Naive thymus-derived CD8-positive, alpha-beta T cell (primary cell): ENCODE measurements at regions of chr19 and their contacts with region 1.

Region 1: DNA sequence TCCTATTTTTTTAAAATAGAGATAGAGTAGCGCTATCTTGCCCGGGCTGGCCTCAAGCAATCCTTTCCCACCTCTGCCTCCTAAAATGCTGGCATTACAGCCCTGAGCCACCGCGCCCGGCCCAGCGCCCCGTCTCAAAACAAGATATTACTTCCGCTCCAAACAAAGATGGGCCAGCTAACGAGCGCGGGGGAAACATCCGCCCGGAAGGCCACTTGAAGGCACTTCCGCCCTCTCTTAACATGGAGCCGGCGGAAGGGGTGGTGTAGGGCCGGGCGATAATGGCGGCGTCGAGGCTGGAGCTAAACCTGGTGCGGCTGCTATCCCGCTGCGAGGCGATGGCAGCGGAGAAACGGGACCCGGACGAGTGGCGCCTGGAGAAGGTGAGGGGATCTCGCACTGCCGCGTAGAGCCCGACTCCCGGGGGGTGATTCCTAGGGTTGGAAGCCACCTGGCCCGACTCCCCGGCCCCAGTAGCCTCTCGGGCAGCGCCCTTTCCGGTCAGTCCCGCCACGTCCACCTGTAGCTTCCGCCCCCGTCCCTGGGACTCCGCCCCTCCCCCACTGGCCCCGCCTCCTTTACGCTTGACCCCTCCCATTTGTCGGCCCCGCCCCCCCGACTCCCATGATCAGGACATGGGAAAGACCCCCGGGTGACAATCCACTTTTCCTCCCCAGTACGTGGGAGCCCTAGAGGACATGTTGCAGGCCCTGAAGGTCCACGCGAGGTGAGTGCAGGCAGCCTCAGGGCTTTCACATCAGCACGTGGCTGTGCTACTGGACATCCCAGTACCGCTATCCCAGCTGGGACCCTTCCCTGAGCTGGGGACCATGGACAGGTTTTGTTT is at the start of gene USE1:
- DNase-seq: peak; percentile 76 to 95 (median 86)
- ATAC-seq: peak; percentile 96 to 99
- H3K4me3 Mint-ChIP-seq: peak within 1 kb of the TSS; percentile 83 to 95 (median 90)
- H3K27ac Mint-ChIP-seq: peak within 1 kb of the TSS; percentile 94 to 100 (median 99)
- H3K4me1 Mint-ChIP-seq: peaks cover 2 to 21% (median 15%) of the 10 kb centered on the region in 4 donors
- H3K27me3 Mint-ChIP-seq: no peaks in the 10 kb centered on the region
- polyA plus RNA-seq, gene USE1: 50.4 to 69.0 (median 57.0) TPM

Region 2: DNA sequence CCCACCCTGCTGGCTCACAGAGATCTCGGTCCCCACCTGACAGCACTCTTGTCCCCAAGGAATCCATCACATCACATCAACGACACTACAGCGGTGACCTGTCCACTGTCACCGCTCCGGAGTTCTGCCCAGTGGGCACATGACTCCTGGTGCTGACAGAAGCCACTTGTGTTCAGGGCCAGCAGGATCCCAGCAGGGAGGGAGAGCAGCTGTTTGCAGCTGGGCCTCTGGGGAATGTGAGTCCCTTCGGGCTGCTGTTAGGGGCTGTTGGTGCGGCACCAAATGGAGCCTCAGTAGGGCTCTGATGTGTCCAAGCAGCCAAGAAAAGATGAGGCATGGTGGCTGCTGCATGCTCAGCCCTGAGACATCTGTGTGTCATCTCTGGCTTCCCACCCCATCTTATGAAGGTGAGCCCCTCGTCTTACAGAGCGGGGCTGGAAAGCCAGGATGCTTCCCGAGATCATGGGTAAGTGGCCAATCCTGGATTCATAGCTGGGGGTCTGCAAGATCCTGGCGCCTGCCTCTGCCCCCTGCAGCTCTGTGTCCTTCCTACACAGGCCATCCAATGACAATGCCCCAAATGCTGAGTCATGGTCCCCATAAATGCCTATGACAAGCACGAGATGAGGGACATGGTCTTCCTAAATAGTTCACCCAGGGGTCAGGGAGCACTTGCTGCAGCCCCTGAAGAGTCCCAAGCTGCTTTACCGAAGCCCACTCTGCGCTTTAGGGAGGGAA is 270.6 kb before region 1 on chr19:
- POLR2A ChIA-PET with region 1: no interaction called
- DNase-seq: no peak
- ATAC-seq: no peak
- H3K4me3 Mint-ChIP-seq: no peak overlapping the region
- H3K27ac Mint-ChIP-seq: no peak overlapping the region
- H3K4me1 Mint-ChIP-seq: peaks cover 0 to 11% (median 0%) of the 10 kb centered on the region in 4 donors
- H3K27me3 Mint-ChIP-seq: peaks cover 0 to 4% (median 0%) of the 10 kb centered on the region in 5 donors

Region 3: GRCh38 chr19:17075035-17075863 is 140.1 kb before region 1 on chr19 and contains the starts of genes HAUS8 and MYO9B:
- POLR2A ChIA-PET with region 1: interaction called, 20 read pairs
- DNase-seq: peak; percentile 98 to 100 (median 99)
- ATAC-seq: peak; percentile 89 to 96
- H3K4me3 Mint-ChIP-seq: peak within 1 kb of the TSS; percentile 91 to 99 (median 98)
- H3K27ac Mint-ChIP-seq: peak within 1 kb of the TSS; percentile 92 to 99 (median 97)
- H3K4me1 Mint-ChIP-seq: peaks cover 29 to 74% (median 66%) of the 10 kb centered on the region in 4 donors
- H3K27me3 Mint-ChIP-seq: no peaks in the 10 kb centered on the region
- polyA plus RNA-seq, gene HAUS8: 5.3 to 11.9 (median 5.9) TPM
- polyA plus RNA-seq, gene MYO9B: 3.3 to 22.3 (median 8.0) TPM

Region 4: GRCh38 chr19:17226002-17226933 is 10.9 kb after region 1 on chr19 and contains the start of gene OCEL1:
- POLR2A ChIA-PET with region 1: interaction called, 105 read pairs
- DNase-seq: peak; percentile 92 to 99 (median 94)
- ATAC-seq: peak; percentile 90 to 92
- H3K4me3 Mint-ChIP-seq: peak within 1 kb of the TSS; percentile 88 to 99 (median 94)
- H3K27ac Mint-ChIP-seq: peak within 1 kb of the TSS; percentile 66 to 99 (median 96)
- H3K4me1 Mint-ChIP-seq: peaks cover 7 to 17% (median 11%) of the 10 kb centered on the region in 4 donors
- H3K27me3 Mint-ChIP-seq: no peaks in the 10 kb centered on the region
- polyA plus RNA-seq, gene OCEL1: 21.9 to 52.4 (median 40.1) TPM

Region 5: DNA sequence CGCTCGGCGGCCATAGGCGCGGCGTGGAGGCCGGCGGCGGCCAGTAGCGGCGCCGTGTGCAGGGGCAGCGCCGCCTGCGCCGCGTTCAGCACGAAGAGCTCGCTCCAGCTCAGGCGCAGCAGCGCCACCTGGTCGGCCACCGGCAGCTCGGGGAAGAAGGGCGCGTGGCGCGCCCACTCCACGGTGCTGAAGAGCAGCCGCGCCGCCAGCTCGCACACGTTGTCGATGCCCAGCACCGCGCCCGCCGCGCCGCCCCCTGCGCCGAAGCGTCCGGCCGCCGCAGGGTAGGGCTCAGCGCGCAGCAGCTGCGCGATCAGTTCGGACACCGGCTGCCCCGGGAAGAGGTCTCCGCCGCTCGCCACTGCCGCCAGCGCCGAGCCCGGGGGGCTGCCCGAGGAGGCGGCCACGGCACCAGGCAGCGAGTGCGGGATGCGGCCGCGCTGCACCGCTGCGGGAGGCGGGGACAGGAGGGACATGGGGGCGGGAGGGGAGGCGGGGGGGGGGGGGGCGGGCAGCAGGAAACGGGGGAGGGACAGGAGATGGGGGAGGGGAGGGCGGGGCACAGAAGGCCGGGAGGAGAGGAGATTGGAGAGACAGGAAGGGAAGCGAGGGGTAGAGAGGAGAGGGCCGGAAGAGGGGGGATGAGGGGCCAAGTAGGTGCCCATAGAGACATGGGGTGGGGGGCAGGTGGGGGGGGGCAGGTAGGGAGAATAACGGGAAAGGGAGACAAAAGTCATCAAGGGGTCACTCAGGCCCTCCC is 20.4 kb after region 1 on chr19:
- POLR2A ChIA-PET with region 1: interaction called, 21 read pairs
- DNase-seq: peak; percentile 58 to 85 (median 72)
- ATAC-seq: peak; percentile 94 to 97
- H3K4me3 Mint-ChIP-seq: peak overlapping the region; percentile 29 to 88 (median 80)
- H3K27ac Mint-ChIP-seq: peak overlapping the region in 1 of 10 donors; percentile 36
- H3K4me1 Mint-ChIP-seq: peaks cover 9 to 15% (median 14%) of the 10 kb centered on the region in 4 donors
- H3K27me3 Mint-ChIP-seq: no peaks in the 10 kb centered on the region

Region 6: GRCh38 chr19:17510220-17510980 is 295.1 kb after region 1 on chr19:
- POLR2A ChIA-PET with region 1: no interaction called
- DNase-seq: no peak
- ATAC-seq: no peak
- H3K4me3 Mint-ChIP-seq: peak overlapping the region; percentile 95 to 100 (median 100)
- H3K27ac Mint-ChIP-seq: peak overlapping the region; percentile 80 to 100 (median 96)
- H3K4me1 Mint-ChIP-seq: peaks cover 16 to 55% (median 43%) of the 10 kb centered on the region in 4 donors
- H3K27me3 Mint-ChIP-seq: no peaks in the 10 kb centered on the region